Sigmoid colon (tissue), 7 donors: ENCODE measurements at regions of chr12 and their contacts with region 1.

Region 1: DNA sequence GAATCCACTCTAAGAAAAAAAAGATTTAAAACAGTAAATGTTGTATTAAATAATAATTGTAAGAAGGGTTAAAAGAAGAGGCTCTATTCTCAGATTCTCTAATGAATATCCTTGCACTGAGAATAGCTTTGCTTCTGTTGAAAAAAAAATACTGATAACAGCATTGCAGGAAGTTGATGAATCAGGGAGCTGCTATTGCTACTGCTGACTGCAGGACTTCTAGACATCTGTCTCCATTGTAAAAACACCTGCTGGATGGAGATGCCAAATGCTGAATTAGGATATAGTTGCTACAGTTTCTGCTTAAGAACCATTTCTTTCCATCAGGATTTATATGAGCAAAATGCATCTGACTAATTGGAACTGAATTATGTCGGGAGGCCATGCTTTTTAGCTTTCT is 50.3 kb upstream of the ANP32D start:
- DNase-seq: no peak
- H3K4me3 ChIP-seq: no peak overlapping the region
- H3K27ac ChIP-seq: no peak overlapping the region
- H3K4me1 ChIP-seq: peaks cover 0 to 11% (median 5%) of the 10 kb centered on the region in 4 donors
- H3K27me3 ChIP-seq: no peaks in the 10 kb centered on the region
- CTCF ChIP-seq: no peak
- EP300 ChIP-seq: no peak
- POLR2A ChIP-seq: no peak

Region 2: DNA sequence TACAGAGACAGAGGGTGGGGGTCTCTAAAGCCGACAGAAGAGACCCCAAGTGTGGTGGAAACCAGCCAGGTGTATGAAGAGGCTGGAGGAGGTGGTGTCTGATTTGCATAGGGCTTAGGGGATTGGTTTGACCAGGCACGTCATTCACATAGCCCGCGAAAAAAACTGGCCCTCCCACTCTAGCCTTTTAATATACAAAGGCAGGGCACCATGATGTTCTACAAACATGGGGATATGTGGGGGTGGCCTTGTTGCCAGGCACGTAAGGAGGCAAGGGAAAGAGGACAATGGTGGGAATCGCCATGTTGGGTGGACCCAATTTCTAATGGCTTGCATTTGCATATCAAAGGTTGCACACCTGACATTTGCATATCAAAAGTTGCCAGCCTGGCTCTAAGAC is 134.6 kb after region 1 on chr12:
- intact Hi-C with region 1: loop called (anchors 5 kb)
- DNase-seq: no peak
- H3K4me3 ChIP-seq: no peak overlapping the region
- H3K27ac ChIP-seq: no peak overlapping the region
- H3K4me1 ChIP-seq: no peaks in the 10 kb centered on the region
- H3K27me3 ChIP-seq: peaks cover 0 to 2% (median 0%) of the 10 kb centered on the region in 3 donors
- CTCF ChIP-seq: no peak
- EP300 ChIP-seq: no peak
- POLR2A ChIP-seq: no peak